Vagina (tissue), 2 donors: ENCODE measurements at regions of chr2 and their contacts with region 1.

Region 1: DNA sequence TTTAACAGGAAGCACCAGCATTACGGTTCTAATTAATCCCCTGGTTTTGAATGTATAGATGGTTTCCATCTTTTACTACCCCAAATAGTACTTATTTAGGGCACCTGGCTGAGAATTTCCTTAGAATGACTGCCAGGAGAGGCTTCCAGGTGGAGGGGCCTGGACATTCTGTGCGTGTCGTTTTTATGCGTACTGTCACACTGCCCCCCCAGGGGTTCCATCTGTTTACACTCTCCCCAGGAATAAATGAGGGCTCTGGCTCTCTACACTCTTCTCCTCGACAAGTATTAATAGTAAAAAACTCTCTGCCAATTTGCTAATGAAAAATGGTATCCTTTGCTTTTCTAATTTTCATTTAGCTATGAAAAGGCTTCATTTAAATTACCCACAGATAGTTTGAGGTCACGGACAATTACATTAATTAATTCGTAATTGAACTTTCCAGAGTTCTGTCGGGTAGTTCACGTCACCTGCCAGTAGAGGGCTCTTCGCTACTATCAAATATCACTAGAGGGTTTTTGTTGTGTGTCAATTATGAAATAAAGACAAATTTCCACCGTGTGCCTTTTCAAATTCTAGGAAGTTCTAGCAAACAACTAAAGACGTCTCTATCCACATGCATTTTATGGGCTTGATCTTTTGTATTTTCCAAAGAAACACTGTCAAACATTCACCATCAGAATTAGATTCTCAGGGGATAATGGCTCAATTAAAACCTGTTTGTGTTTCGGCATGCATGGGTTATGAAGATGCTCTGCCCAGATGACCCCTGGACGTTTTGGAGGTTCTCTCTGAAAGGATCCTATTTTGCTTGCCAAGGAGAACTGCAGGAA is 88.8 kb upstream of the ASB18 start:
- DNase-seq: peak in 1 of 2 donors; percentile 77
- H3K4me3 ChIP-seq: no peak overlapping the region
- H3K27ac ChIP-seq: no peak overlapping the region
- H3K4me1 ChIP-seq: no peaks in the 10 kb centered on the region
- H3K27me3 ChIP-seq: no peaks in the 10 kb centered on the region
- CTCF ChIP-seq: peak; percentile 74 to 89 (median 88)
- POLR2A ChIP-seq: no peak

Region 2: DNA sequence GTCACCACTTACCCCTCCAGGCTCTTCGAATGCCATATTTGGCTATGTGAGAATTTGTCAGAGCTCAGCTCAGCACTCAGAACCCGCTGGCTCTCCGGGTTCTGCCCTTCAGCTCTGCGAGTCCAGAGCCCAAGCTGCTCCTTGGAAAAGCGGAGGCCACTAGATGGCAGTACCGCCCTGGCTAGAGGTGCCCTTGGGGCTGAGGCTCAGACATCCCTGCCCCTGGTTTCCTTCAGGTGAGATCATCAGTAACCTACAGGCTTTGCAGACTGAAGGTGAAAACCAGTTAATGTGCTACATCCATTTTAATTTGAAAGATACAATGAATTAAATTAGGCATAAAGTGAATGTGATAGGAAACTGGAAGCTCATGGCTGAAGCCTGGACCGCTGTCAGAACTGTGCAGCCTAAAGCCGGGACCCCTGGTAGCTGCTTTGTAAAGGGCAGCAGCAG is 573.5 kb before region 1 on chr2:
- intact Hi-C with region 1: no loop called
- DNase-seq: no peak
- H3K4me3 ChIP-seq: no peak overlapping the region
- H3K27ac ChIP-seq: no peak overlapping the region
- H3K4me1 ChIP-seq: no peaks in the 10 kb centered on the region
- H3K27me3 ChIP-seq: no peaks in the 10 kb centered on the region
- CTCF ChIP-seq: peak; percentile 21 to 77 (median 33)
- POLR2A ChIP-seq: no peak

Region 3: DNA sequence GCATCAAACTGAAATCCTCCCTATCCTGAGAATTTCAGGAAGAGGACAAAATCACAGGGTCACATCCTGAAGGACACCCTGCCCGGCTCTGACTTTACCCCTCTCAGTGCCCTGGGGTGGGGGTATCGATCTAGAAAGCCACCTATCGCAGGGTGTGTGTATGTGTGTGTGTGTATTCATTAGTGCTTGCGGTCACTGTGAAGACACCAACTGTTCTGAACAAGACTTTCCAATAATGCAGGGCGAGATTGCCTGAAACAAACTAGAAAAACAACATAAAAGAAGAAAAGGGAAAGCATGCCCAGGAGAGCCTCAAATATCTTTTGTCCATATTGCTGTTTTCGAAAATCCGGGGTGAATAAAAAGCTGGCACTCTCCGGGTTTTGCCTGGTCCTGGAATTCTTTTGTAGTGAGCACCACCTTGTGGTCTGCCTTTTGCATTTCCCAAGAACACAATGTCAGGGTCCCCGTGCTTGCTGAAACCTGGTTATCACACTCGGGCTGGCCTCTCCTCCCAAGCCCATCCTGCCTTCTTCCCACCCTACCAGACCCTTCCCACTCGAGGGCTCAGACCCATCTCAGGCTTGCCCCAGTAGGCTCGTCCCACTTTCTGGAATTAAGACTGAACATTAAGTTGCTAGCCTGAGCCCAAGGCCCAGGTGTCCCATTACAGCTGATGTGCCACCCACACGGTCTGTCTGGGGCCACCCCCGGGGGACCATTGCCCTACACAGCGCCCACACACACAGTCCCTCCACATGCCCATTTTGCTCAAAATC is 707.7 kb after region 1 on chr2:
- intact Hi-C with region 1: loop called (anchors 5 kb)
- DNase-seq: peak in 1 of 2 donors; percentile 87
- H3K4me3 ChIP-seq: no peak overlapping the region
- H3K27ac ChIP-seq: no peak overlapping the region
- H3K4me1 ChIP-seq: peaks cover 4% of the 10 kb centered on the region
- H3K27me3 ChIP-seq: no peaks in the 10 kb centered on the region
- CTCF ChIP-seq: peak; percentile 33 to 78 (median 49)
- POLR2A ChIP-seq: no peak